Prostate gland (tissue), 2 donors: ENCODE measurements at regions of chr2 and their contacts with region 1.

Region 1: DNA sequence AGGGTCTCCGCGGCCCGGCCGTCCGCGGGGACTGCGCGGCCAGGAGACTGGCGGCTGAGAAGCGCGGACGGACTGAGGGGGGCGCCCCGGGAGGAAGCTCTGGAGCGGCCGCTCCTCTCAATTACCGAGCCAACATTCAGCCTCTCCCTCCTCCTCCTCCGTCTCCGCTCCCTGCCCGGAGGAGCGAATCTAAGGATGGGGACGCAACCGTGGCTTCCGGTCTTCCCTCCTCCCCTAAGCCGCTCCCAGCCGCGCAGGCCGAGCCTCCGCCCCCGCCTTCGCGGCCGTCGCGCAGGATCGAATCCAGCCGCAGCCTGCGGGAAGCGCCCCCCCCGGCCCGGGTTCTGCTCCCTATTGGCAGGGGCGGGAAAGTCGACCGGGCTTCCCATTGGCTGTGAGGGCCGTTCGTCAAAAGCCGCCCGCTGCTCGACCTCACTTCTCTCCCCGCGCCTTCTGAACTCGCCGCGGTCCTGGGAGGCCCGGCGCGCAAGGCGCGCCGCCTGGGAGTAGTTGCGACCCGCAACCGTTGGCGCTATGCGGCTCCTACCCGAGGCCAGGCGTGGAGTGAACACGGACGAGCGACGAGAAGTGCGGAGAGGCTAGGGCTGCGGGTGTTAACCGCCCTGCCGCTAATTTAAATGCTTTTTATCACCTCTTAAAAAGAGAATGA is at the start of gene HNRNPLL:
- DNase-seq: peak; percentile 97
- H3K4me3 ChIP-seq: peak within 1 kb of the TSS; percentile 90 to 92
- H3K27ac ChIP-seq: peak within 1 kb of the TSS; percentile 97 to 98
- H3K4me1 ChIP-seq: no peaks in the 10 kb centered on the region
- H3K27me3 ChIP-seq: no peaks in the 10 kb centered on the region
- CTCF ChIP-seq: no peak
- POLR2A ChIP-seq: peak; percentile 97
- total RNA-seq, gene HNRNPLL: 36.1 to 63.6 TPM

Region 2: DNA sequence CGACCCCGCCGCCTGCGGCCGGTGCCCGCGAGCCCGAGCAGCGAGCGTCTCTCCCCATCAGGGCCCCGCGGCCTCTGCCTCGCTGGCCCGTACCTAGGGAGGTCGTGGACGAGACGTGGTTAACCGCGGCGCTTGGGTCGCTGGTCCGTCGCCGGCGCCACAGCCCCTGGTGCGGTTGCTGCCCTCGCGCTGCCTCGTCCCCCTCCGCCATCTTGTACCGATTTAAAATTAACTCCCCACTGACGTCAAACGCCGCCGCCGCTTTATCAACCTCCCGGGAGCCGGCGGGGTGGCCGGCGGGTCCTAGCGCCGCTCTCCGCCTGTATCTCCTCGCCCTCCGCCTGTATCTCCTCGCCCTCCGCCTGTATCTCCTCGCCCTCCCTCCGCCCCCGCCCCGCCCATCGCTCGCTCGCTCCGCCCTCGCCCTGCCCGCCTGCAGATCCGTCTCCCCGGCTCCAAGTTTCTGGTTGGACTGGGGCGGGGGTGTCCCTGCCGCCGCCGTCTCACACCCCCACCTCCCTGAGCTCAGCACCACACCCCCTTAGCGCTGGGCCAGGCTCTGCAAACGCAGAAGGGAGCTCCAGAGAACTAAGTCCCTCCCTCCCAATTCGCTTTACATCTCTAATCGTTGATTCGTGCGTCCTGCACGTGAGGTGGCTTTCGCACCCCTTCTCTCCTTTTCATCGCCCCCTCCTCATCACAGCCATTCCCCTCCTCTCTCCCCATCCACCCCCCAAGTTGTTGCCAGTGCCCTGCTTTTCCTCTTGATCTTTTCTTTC is 225.6 kb before region 1 on chr2 and contains the start of gene ATL2:
- intact Hi-C with region 1: loop called (anchors 5 kb)
- DNase-seq: peak; percentile 97
- H3K4me3 ChIP-seq: peak within 1 kb of the TSS; percentile 87 to 99
- H3K27ac ChIP-seq: peak within 1 kb of the TSS; percentile 95 to 99
- H3K4me1 ChIP-seq: no peaks in the 10 kb centered on the region
- H3K27me3 ChIP-seq: no peaks in the 10 kb centered on the region
- CTCF ChIP-seq: no peak
- POLR2A ChIP-seq: peak; percentile 97
- total RNA-seq, gene ATL2: 70.9 to 88.7 TPM

Region 3: DNA sequence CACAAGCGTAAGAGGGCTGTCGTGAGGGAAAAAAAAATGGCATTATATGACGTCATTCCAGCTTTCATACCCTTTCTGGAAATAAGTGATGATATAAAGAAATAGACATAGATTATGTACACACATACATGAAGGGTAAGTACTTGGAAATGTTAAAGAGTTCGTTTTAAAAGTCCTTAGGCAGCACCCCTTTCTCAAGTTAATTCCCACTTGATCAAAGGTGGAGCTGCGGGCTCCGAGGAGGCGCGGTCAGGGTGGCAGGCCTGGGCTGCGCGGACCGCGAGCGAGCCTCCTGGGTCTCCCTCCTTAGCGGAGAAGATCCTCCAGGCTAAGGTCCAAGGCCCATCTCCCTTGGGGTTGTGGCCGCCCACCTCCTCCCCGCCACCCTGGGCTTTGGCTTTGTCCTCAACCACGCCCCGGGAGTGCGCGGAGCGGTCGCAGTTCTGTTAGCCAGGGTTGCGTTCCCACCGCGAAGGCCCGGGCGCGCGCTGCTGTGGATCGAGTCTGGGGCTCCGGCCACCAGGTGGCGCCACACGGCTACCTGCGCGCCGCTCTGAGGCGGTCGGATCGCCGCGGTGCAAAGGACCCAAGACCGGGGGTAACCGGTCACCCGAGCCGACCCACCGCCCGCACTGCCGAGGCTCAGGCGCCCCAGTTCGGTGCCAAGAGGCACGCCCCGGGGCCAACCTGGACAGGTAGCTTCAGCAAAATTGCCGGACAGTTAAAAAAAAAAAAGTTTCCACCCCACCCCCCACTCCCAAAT is 66.9 kb before region 1 on chr2:
- intact Hi-C with region 1: loop called (anchors 5 kb)
- DNase-seq: peak; percentile 73
- H3K4me3 ChIP-seq: peak overlapping the region; percentile 27 to 31
- H3K27ac ChIP-seq: peak overlapping the region; percentile 32 to 58
- H3K4me1 ChIP-seq: no peaks in the 10 kb centered on the region
- H3K27me3 ChIP-seq: no peaks in the 10 kb centered on the region
- CTCF ChIP-seq: peak; percentile 81 to 96 (median 89)
- POLR2A ChIP-seq: no peak

Region 4: GRCh38 chr2:38665854-38666555 is 63.1 kb after region 1 on chr2 and contains the start of gene GALM:
- intact Hi-C with region 1: loop called (anchors 2 kb)
- DNase-seq: peak; percentile 56
- H3K4me3 ChIP-seq: peak within 1 kb of the TSS; percentile 30 to 41
- H3K27ac ChIP-seq: peak within 1 kb of the TSS; percentile 49 to 60
- H3K4me1 ChIP-seq: no peaks in the 10 kb centered on the region
- H3K27me3 ChIP-seq: no peaks in the 10 kb centered on the region
- CTCF ChIP-seq: no peak
- POLR2A ChIP-seq: peak; percentile 60
- total RNA-seq, gene GALM: 5.6 to 22.3 TPM

Region 5: DNA sequence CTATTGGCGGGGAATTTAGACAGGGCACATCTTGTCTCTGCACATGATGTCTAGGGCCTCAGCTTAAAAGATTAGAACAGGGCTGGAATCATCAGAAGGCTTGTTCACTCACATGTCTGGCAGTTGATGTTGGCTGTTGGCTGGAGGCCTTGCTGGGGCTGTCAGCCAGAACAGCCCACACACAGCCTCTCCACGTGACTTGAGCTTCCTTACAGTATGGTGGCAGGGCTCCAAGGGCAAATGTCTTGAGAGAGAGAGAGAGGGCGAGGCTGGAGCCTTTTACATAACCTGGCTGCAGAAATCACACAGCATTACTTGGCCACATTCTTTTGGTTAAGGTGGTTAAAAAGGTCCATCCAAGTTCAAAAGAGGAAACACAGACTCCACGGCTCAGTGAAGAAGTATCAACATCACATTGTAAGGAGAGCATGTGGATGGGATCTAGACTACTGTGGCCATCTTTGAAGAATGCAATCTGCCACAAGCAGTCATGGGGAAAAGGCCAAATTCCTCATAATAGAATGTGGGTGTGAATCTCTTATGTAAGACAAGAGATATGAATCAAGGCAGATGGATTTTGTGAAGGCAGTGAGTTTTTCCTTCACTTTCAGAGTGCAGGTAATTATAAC is 117.9 kb after region 1 on chr2:
- intact Hi-C with region 1: loop called (anchors 5 kb)
- DNase-seq: peak; percentile 68
- H3K4me3 ChIP-seq: no peak overlapping the region
- H3K27ac ChIP-seq: peak overlapping the region; percentile 29 to 46
- H3K4me1 ChIP-seq: no peaks in the 10 kb centered on the region
- H3K27me3 ChIP-seq: no peaks in the 10 kb centered on the region
- CTCF ChIP-seq: no peak
- POLR2A ChIP-seq: no peak

Region 6: GRCh38 chr2:38734299-38735058 is 131.6 kb after region 1 on chr2:
- intact Hi-C with region 1: loop called (anchors 5 kb)
- DNase-seq: no peak
- H3K4me3 ChIP-seq: no peak overlapping the region
- H3K27ac ChIP-seq: peak overlapping the region in 1 of 2 donors; percentile 2
- H3K4me1 ChIP-seq: no peaks in the 10 kb centered on the region
- H3K27me3 ChIP-seq: no peaks in the 10 kb centered on the region
- CTCF ChIP-seq: no peak
- POLR2A ChIP-seq: no peak

Region 7: DNA sequence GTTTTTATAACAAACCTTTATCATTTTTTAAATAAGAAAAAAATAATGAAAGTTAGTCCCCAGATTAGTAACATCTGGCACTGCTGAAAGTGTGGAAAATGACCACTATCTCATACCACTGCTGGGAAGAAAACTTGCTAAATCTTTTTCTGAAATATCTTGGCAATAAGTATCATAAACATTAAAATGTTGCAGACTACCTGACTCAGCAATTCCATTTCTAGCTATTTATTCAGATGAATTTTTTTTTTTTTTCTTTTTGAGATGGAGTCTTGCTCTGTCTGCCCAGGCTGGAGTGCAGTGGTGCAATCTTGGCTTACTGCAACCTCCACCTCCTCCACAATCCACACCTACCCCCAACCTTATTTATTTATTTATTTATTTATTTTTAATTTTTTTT is 553.2 kb after region 1 on chr2:
- intact Hi-C with region 1: no loop called
- DNase-seq: no peak
- H3K4me3 ChIP-seq: no peak overlapping the region
- H3K27ac ChIP-seq: no peak overlapping the region
- H3K4me1 ChIP-seq: no peaks in the 10 kb centered on the region
- H3K27me3 ChIP-seq: no peaks in the 10 kb centered on the region
- CTCF ChIP-seq: no peak
- POLR2A ChIP-seq: no peak